ENCODE measurements at regions of chr12 and their contacts with region 1.

Region 1: DNA sequence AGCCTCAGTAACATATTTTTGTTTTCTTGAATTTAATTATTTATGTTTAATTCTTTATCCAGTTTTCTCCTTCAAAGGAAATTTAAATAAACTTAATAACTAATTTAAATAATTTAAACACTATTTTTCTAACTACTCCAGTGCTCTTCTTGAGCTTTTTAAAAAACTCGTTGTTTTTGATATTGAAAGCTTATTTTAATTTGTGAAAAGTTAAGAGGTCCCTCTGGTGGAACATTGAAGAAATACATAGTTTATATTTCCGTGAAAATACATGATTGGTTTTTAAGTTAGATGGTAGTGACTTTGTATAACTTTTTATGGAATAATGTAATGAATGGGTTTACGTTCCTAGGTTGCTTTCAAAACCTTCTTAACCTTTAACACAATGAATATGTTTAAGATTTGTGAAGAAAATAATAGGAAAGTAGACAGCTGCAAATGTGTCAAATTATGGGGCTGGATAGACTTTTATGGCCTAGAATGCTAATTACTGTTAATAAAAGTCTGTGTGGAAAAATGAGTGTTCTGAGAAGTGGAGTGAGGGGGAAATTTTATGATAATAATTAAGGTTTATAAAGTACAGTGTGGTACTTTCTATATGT is 45.9 kb upstream of the MSRB3 start:
- DNase-seq: peak; percentile 56 to 73 (median 70)
- H3K4me3 ChIP-seq: no peak overlapping the region
- H3K27ac ChIP-seq: no peak overlapping the region
- H3K4me1 ChIP-seq: peaks cover 0 to 2% (median 0%) of the 10 kb centered on the region in 4 experiments
- H3K27me3 ChIP-seq: no peaks in the 10 kb centered on the region

Region 2: DNA sequence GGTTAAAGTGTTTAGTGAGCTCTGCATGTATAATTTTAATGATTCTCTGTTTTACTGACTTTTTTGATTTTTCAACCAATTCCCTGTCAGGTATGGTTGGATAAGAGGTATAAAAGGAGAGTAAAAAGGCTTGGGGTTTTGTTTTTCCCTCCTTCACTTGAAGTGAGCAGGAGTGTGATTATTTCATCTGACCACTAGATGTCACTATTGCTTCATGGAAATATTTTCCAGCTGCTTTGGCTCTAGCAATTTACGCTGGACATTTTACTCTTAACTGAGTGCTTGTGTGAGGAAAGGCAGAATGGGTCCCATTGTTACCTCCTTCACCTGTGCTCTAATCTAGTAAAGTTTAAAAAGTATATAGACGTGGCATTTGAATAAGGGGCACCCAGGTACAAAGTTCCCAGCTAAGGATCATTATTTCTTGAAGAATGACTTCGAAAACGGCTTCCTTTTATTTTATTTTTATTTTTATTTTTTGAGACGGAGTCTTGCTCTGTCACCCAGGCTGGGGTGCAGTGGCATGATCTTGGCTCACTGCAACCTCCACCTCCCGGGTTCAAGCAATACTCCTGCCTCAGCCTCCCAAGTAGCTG is 341.6 kb before region 1 on chr12:
- CTCF ChIA-PET with region 1: interaction called, 53 read pairs
- POLR2A ChIA-PET with region 1: no interaction called
- DNase-seq: peak; percentile 60 to 83 (median 74)
- H3K4me3 ChIP-seq: no peak overlapping the region
- H3K27ac ChIP-seq: no peak overlapping the region
- H3K4me1 ChIP-seq: peaks cover 0 to 6% (median 3%) of the 10 kb centered on the region in 4 experiments
- H3K27me3 ChIP-seq: peaks cover 3 to 16% (median 10%) of the 10 kb centered on the region in 5 experiments

Region 3: GRCh38 chr12:65106948-65107347 is 125.6 kb before region 1 on chr12:
- CTCF ChIA-PET with region 1: interaction called, 19 read pairs
- POLR2A ChIA-PET with region 1: no interaction called
- DNase-seq: peak in 2 of 3 donors; percentile 28 to 31
- H3K4me3 ChIP-seq: no peak overlapping the region
- H3K27ac ChIP-seq: no peak overlapping the region
- H3K4me1 ChIP-seq: no peaks in the 10 kb centered on the region
- H3K27me3 ChIP-seq: peaks cover 0 to 4% (median 0%) of the 10 kb centered on the region in 5 experiments

Region 4: DNA sequence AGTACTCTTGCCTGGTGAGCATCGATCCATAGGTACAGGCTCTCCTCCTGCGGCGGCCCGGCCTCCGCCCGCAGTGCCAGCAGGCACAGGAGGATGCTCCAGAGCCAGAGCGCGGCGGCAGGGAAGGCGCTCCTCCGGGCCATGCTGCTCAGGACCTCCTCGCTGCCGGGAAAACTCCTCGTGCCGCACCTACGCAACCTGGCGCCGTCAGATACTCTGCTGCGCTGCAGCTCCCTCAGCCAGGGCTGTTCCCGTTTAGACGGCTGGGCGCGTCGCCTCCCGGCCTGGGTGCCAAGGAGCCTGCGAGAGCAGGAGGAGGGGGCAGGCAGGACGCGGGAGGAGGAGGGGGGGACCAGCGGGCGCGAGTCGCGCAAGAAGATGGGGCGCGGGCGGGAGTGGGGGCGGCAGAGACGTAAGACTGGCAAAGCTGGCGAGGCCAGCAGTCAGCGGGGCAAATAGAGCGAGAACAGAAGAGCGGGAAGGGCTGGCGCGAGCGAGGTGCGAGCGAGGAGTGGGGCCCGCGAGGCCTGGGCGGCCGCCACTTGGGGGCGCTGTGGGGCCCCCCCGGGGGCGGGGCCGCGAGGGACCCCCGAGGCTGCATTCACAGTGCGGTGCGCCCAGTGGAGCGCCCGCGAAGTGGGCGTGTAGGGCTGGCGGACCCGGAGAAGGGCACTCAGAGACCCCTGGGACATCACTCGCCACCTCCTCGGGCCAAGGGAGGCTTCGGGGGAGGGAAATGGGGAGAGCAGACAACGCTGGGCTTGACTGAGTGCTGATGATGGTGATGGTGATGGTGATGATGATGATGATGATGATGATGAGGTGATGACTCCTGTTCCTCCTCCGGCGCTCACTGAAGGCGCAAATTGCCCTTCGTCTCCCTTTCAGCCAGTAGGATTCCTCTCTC is 111.3 kb before region 1 on chr12 and contains the start of gene WIF1:
- CTCF ChIA-PET with region 1: interaction called, 26 read pairs
- POLR2A ChIA-PET with region 1: no interaction called
- DNase-seq: peak; percentile 44 to 68 (median 63)
- H3K4me3 ChIP-seq: peak within 1 kb of the TSS; percentile 27 to 63 (median 50)
- H3K27ac ChIP-seq: no peak within 1 kb of the TSS
- H3K4me1 ChIP-seq: peaks cover 0 to 30% (median 22%) of the 10 kb centered on the region in 4 experiments
- H3K27me3 ChIP-seq: peaks cover 8 to 35% (median 20%) of the 10 kb centered on the region in 5 experiments

Region 5: GRCh38 chr12:65169320-65170208 is 63.0 kb before region 1 on chr12 and contains the start of gene LEMD3:
- CTCF ChIA-PET with region 1: interaction called, 23 read pairs
- POLR2A ChIA-PET with region 1: interaction called, 14 read pairs
- DNase-seq: peak; percentile 94 to 97 (median 96)
- H3K4me3 ChIP-seq: peak within 1 kb of the TSS; percentile 75 to 100 (median 96)
- H3K27ac ChIP-seq: peak within 1 kb of the TSS; percentile 92 to 96
- H3K4me1 ChIP-seq: peaks cover 15 to 48% (median 32%) of the 10 kb centered on the region in 4 experiments
- H3K27me3 ChIP-seq: no peaks in the 10 kb centered on the region

Region 6: GRCh38 chr12:65209655-65210043 is 22.9 kb before region 1 on chr12:
- CTCF ChIA-PET with region 1: interaction called, 10 read pairs
- POLR2A ChIA-PET with region 1: interaction called, 3 read pairs
- DNase-seq: peak; percentile 64 to 83 (median 75)
- H3K4me3 ChIP-seq: peak overlapping the region in 5 of 7 experiments; percentile 1 to 62 (median 39)
- H3K27ac ChIP-seq: peak overlapping the region; percentile 70 to 77
- H3K4me1 ChIP-seq: peaks cover 14 to 53% (median 40%) of the 10 kb centered on the region in 4 experiments
- H3K27me3 ChIP-seq: no peaks in the 10 kb centered on the region

Region 7: GRCh38 chr12:65584016-65584415 is 351.4 kb after region 1 on chr12:
- CTCF ChIA-PET with region 1: no interaction called
- POLR2A ChIA-PET with region 1: no interaction called
- DNase-seq: no peak
- H3K4me3 ChIP-seq: no peak overlapping the region
- H3K27ac ChIP-seq: no peak overlapping the region
- H3K4me1 ChIP-seq: peaks cover 0 to 5% (median 0%) of the 10 kb centered on the region in 4 experiments
- H3K27me3 ChIP-seq: no peaks in the 10 kb centered on the region